ENCODE measurements at regions of chr19 and their contacts with region 1.

Region 1: GRCh38 chr19:33143897-33144405 is 12.0 kb downstream of the WDR88 start:
- DNase-seq: peak; percentile 73
- ATAC-seq: peak; percentile 98
- H3K4me3 ChIP-seq: no peak overlapping the region
- H3K4me3 Mint-ChIP-seq: peak overlapping the region; percentile 48
- H3K27ac ChIP-seq: no peak overlapping the region
- H3K27ac Mint-ChIP-seq: no peak overlapping the region
- H3K4me1 ChIP-seq: peaks cover 0 to 5% of the 10 kb centered on the region in 2 donors
- H3K4me1 Mint-ChIP-seq: peaks cover 4% of the 10 kb centered on the region
- H3K27me3 ChIP-seq: no peaks in the 10 kb centered on the region
- H3K27me3 Mint-ChIP-seq: peaks cover 16% of the 10 kb centered on the region
- CTCF ChIP-seq: peak; percentile 91

Region 2: GRCh38 chr19:32924203-32924930 is 219.6 kb before region 1 on chr19:
- CTCF ChIA-PET with region 1: no interaction called
- POLR2A ChIA-PET with region 1: no interaction called
- intact Hi-C with region 1: no loop called
- DNase-seq: no peak
- ATAC-seq: no peak
- H3K4me3 ChIP-seq: no peak overlapping the region
- H3K4me3 Mint-ChIP-seq: no peak overlapping the region
- H3K27ac ChIP-seq: no peak overlapping the region
- H3K27ac Mint-ChIP-seq: no peak overlapping the region
- H3K4me1 ChIP-seq: no peaks in the 10 kb centered on the region
- H3K4me1 Mint-ChIP-seq: no peaks in the 10 kb centered on the region
- H3K27me3 ChIP-seq: no peaks in the 10 kb centered on the region
- H3K27me3 Mint-ChIP-seq: no peaks in the 10 kb centered on the region
- CTCF ChIP-seq: no peak

Region 3: GRCh38 chr19:33186431-33187182 is 42.7 kb after region 1 on chr19:
- CTCF ChIA-PET with region 1: interaction called, 58 read pairs
- POLR2A ChIA-PET with region 1: no interaction called
- intact Hi-C with region 1: no loop called
- DNase-seq: no peak
- ATAC-seq: no peak
- H3K4me3 ChIP-seq: no peak overlapping the region
- H3K4me3 Mint-ChIP-seq: no peak overlapping the region
- H3K27ac ChIP-seq: no peak overlapping the region
- H3K27ac Mint-ChIP-seq: no peak overlapping the region
- H3K4me1 ChIP-seq: peaks cover 8 to 14% of the 10 kb centered on the region in 2 donors
- H3K4me1 Mint-ChIP-seq: peaks cover 9% of the 10 kb centered on the region
- H3K27me3 ChIP-seq: peaks cover 0 to 1% (median 0%) of the 10 kb centered on the region in 4 experiments
- H3K27me3 Mint-ChIP-seq: peaks cover 18% of the 10 kb centered on the region
- CTCF ChIP-seq: no peak

Region 4: GRCh38 chr19:33406521-33407139 is 262.7 kb after region 1 on chr19:
- CTCF ChIA-PET with region 1: interaction called, 7 read pairs
- POLR2A ChIA-PET with region 1: no interaction called
- intact Hi-C with region 1: loop called (anchors 2 kb)
- DNase-seq: peak; percentile 78
- ATAC-seq: peak; percentile 85
- H3K4me3 ChIP-seq: no peak overlapping the region
- H3K4me3 Mint-ChIP-seq: no peak overlapping the region
- H3K27ac ChIP-seq: no peak overlapping the region
- H3K27ac Mint-ChIP-seq: no peak overlapping the region
- H3K4me1 ChIP-seq: no peaks in the 10 kb centered on the region
- H3K4me1 Mint-ChIP-seq: no peaks in the 10 kb centered on the region
- H3K27me3 ChIP-seq: no peaks in the 10 kb centered on the region
- H3K27me3 Mint-ChIP-seq: no peaks in the 10 kb centered on the region
- CTCF ChIP-seq: peak; percentile 90

Measured in B cell (primary cell).